ENCODE measurements at regions of chr22 and their contacts with region 1.

Region 1: GRCh38 chr22:41285820-41286638 is at the start of gene RANGAP1:
- DNase-seq: peak; percentile 99
- ATAC-seq: peak; percentile 98
- H3K4me3 Mint-ChIP-seq: peak within 1 kb of the TSS; percentile 97
- H3K27ac Mint-ChIP-seq: peak within 1 kb of the TSS; percentile 98
- H3K4me1 Mint-ChIP-seq: peaks cover 42% of the 10 kb centered on the region
- H3K27me3 Mint-ChIP-seq: no peaks in the 10 kb centered on the region
- total RNA-seq, gene RANGAP1: 123 to 125 TPM

Region 2: GRCh38 chr22:41009202-41009943 is 276.7 kb before region 1 on chr22:
- CTCF ChIA-PET with region 1: no interaction called
- POLR2A ChIA-PET with region 1: no interaction called
- DNase-seq: no peak
- ATAC-seq: no peak
- H3K4me3 Mint-ChIP-seq: no peak overlapping the region
- H3K27ac Mint-ChIP-seq: no peak overlapping the region
- H3K4me1 Mint-ChIP-seq: no peaks in the 10 kb centered on the region
- H3K27me3 Mint-ChIP-seq: peaks cover 2% of the 10 kb centered on the region

Region 3: GRCh38 chr22:41091132-41092022 is 194.7 kb before region 1 on chr22:
- CTCF ChIA-PET with region 1: no interaction called
- POLR2A ChIA-PET with region 1: interaction called, 12 read pairs
- DNase-seq: peak; percentile 99
- ATAC-seq: peak; percentile 87
- H3K4me3 Mint-ChIP-seq: peak overlapping the region; percentile 97
- H3K27ac Mint-ChIP-seq: peak overlapping the region; percentile 100
- H3K4me1 Mint-ChIP-seq: peaks cover 23% of the 10 kb centered on the region
- H3K27me3 Mint-ChIP-seq: no peaks in the 10 kb centered on the region

Region 4: DNA sequence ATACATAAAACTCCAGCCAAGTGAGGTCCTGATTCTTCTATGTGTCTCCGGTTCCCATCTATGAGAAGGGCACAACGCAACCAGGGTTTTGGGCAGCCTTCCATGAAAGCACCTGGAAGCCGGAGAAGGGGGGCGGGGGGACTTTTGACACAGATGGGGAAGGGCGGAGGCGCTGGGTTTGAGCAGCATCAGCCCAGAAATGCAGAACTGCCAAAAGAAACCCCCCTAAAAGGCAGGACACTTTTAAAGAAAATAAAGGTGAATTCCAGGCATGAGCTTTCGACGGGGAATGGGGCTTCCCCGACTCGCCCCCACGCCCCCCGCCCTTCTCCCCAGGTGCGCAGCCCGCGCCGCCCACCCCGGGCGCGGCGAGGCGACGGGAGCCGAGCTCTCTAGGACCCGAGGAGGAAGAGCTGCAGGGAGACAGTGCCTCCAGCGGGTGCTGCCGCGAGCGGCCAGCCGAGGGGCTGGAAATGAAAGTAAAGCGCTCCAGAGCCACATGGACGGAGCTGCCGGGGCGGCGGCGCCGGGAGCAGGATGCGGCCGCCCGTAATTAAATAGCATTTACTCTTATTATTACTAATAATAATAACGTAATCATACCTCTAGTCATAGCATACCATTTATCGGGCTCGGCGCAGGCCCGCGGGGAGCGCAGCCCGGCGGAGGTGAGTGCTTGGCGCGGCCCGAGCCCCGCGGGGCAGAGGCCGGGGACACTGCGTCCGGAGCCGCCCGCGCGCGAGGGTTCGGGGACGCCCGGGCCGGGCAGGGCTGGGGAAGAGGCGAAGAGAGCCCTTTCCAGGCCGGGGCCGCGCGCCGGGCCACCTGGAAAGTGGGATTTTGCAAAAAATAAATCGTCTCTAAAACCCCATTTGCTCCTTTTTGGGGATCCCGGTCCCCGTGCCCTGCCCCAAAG is 15.3 kb after region 1 on chr22 and contains the start of gene ZC3H7B:
- CTCF ChIA-PET with region 1: interaction called, 15 read pairs
- POLR2A ChIA-PET with region 1: interaction called, 45 read pairs
- DNase-seq: peak; percentile 89
- ATAC-seq: peak; percentile 100
- H3K4me3 Mint-ChIP-seq: peak within 1 kb of the TSS; percentile 79
- H3K27ac Mint-ChIP-seq: peak within 1 kb of the TSS; percentile 67
- H3K4me1 Mint-ChIP-seq: peaks cover 32% of the 10 kb centered on the region
- H3K27me3 Mint-ChIP-seq: no peaks in the 10 kb centered on the region
- total RNA-seq, gene ZC3H7B: 48.4 to 50.8 TPM

Region 5: GRCh38 chr22:41334951-41335635 is 49.1 kb after region 1 on chr22:
- CTCF ChIA-PET with region 1: no interaction called
- POLR2A ChIA-PET with region 1: no interaction called
- DNase-seq: no peak
- ATAC-seq: no peak
- H3K4me3 Mint-ChIP-seq: no peak overlapping the region
- H3K27ac Mint-ChIP-seq: peak overlapping the region; percentile 35
- H3K4me1 Mint-ChIP-seq: peaks cover 10% of the 10 kb centered on the region
- H3K27me3 Mint-ChIP-seq: no peaks in the 10 kb centered on the region

Region 6: DNA sequence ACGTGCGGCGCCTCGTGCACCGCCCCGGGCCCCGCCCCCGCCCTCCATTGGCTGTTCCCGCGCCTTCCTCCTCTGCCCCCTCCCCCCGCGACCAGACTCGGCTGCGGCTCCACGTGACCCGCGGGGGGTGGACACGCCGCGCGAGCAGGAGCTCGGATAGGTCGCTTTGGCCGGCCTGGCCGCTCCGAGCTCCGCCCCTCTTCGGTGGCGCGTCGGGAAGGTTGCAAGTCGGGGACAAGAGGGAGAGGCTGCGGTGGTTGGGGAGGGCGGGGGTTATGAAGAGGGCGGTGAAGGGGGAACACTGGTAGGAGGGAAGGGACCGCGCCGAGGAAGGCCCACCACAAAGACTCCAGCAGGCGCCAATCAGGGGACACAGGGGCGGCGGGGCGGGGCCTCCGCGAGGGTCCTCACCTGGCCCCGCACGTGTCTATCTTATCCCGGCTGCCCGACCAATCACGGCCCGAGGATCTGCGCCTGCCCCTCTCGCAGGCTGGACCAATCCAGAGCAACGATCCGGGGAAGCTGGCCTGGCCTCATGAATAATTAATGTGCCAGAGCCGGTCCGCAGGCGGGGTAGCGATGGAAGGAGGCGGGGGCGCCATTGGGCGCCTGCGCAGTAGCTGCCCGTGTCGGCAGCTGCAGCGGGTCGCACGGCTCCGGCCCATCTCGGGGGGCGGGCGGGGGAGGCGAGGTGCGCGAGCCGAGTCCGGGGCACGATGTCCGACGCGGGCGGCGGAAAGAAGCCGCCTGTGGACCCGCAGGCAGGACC is 95.5 kb after region 1 on chr22 and contains the start of gene TEF:
- CTCF ChIA-PET with region 1: no interaction called
- POLR2A ChIA-PET with region 1: interaction called, 16 read pairs
- DNase-seq: peak; percentile 98
- ATAC-seq: peak; percentile 93
- H3K4me3 Mint-ChIP-seq: peak within 1 kb of the TSS; percentile 87
- H3K27ac Mint-ChIP-seq: peak within 1 kb of the TSS; percentile 96
- H3K4me1 Mint-ChIP-seq: peaks cover 17% of the 10 kb centered on the region
- H3K27me3 Mint-ChIP-seq: peaks cover 6% of the 10 kb centered on the region
- total RNA-seq, gene TEF: 2.9 to 3.0 TPM

Measured in activated CD8-positive, alpha-beta T cell treated with anti-CD3 and anti-CD28 coated beads, Interleukin-2, amount 10 ng/mL, durations not matched to agents 7 days and 5 days (primary cell).